ENCODE measurements at regions of chr1 and their contacts with region 1.

Region 1: GRCh38 chr1:157138220-157139051 is at the start of gene ETV3:
- DNase-seq: peak; percentile 70 to 89
- H3K4me3 ChIP-seq: peak within 1 kb of the TSS; percentile 68 to 99 (median 94)
- H3K27ac ChIP-seq: peak within 1 kb of the TSS; percentile 87
- H3K4me1 ChIP-seq: peaks cover 2 to 17% (median 7%) of the 10 kb centered on the region in 4 experiments; a peak in 4 of 7 replicates
- H3K27me3 ChIP-seq: no peaks in the 10 kb centered on the region
- CTCF ChIP-seq: no peak
- EP300 ChIP-seq: peak in 1 of 2 experiments; percentile 24; a peak in 1 of 3 replicates
- POLR2A ChIP-seq: peak in 1 of 2 experiments; percentile 71; a peak in 1 of 3 replicates
- RAD21 ChIP-seq: no peak
- total RNA-seq, gene ETV3: 23.8 and 26.6 TPM in 2 replicates

Region 2: DNA sequence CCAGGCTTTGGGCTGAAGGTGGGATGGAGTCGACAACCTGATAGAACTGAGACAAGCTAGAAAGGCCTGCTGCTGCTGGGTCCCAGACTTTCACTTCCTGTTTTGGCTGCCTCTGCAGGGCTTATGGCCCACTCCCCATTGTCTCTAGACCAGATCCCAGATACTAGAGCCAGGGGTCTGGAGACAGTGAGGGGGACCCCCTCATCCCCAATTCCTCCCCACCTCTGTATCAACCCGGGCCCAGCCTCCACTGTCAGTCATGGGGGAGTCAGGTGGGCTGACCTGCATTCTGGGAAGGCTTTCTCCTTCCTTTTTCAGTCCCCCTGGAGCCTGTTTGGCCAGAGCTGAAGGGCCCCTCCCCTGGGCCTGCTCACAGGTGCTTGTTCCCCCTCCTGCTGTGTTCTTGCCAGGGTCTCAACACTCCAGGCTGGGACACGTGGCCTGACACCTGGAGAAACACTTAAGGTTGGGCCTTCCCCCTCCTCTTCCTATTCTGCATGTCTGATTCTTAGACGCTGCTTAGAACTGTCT is 20.8 kb before region 1 on chr1:
- CTCF ChIA-PET with region 1: interaction called, 10 read pairs
- POLR2A ChIA-PET with region 1: interaction called, 21 read pairs
- DNase-seq: peak in 1 of 2 experiments; percentile 52
- H3K4me3 ChIP-seq: no peak overlapping the region
- H3K27ac ChIP-seq: no peak overlapping the region; the same call in 1 of the 2 replicates
- H3K4me1 ChIP-seq: peaks cover 18 to 42% (median 27%) of the 10 kb centered on the region in 4 experiments
- H3K27me3 ChIP-seq: peaks cover 0 to 3% (median under 1%) of the 10 kb centered on the region in 4 experiments; a peak in 4 of 7 replicates
- CTCF ChIP-seq: no peak
- EP300 ChIP-seq: no peak
- POLR2A ChIP-seq: no peak
- RAD21 ChIP-seq: no peak

Region 3: GRCh38 chr1:157124855-157125254 is 13.6 kb before region 1 on chr1:
- CTCF ChIA-PET with region 1: interaction called, 27 read pairs
- POLR2A ChIA-PET with region 1: interaction called, 28 read pairs
- DNase-seq: no peak
- H3K4me3 ChIP-seq: no peak overlapping the region
- H3K27ac ChIP-seq: no peak overlapping the region
- H3K4me1 ChIP-seq: peaks cover 0 to 6% (median 0%) of the 10 kb centered on the region in 4 experiments; a peak in 1 of 7 replicates
- H3K27me3 ChIP-seq: no peaks in the 10 kb centered on the region
- CTCF ChIP-seq: peak in 2 of 3 experiments; percentile 30 to 31; a peak in 2 of 4 replicates
- EP300 ChIP-seq: no peak
- POLR2A ChIP-seq: no peak
- RAD21 ChIP-seq: no peak; a peak in 1 of 4 replicates

Region 4: DNA sequence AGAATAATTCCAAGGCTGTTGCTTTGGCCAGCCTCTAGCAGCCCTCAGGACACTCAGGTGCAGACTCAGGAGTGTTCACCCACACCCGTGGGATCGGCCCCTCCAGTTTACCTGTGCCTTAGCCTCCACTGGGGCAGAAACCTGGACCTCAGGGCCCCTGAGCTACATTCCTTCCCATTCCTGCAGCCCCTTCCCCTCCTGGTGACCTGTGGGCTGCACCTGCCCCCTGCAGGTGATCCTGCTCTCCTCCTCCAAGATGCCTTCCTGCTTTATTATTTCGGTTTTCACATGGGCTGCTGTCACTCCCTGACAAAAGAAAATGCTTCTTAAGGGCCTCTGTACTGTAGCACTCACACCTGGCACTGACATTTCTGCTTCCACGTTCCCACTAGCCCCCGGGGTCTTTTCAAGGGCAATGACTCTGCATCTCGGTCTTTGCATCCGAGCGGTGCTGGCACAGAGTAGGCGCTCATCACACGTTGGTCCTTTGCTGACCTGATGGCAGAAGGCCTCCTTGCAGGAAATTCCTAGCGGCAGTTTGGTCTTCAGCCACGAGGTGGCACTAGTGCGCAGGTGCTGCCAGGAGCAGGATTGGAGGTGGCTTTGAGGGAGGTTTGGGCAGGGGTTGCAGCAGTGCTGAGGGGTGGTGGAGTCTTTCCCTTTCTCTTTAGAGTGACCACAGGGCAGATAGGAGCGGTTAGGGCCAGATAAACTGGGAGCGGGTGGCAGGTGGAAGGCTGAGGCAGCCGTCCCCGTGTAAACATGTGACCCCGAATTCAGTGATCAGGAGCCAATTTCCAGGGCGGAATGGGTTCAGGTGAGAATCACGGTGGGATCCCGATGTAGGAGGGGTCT is 25.1 kb after region 1 on chr1:
- CTCF ChIA-PET with region 1: interaction called, 12 read pairs
- POLR2A ChIA-PET with region 1: interaction called, 70 read pairs
- DNase-seq: peak; percentile 86 to 100
- H3K4me3 ChIP-seq: peak overlapping the region in 2 of 4 experiments; percentile 17 to 43; a peak in 2 of 8 replicates
- H3K27ac ChIP-seq: peak overlapping the region; percentile 55; the same call in 1 of the 2 replicates
- H3K4me1 ChIP-seq: peaks cover 11 to 19% (median 16%) of the 10 kb centered on the region in 4 experiments
- H3K27me3 ChIP-seq: no peaks in the 10 kb centered on the region
- CTCF ChIP-seq: peak; percentile 93 to 98 (median 95)
- EP300 ChIP-seq: no peak
- POLR2A ChIP-seq: 0 out of 3 replicates have a peak, but pooled peaks of 1 of the 2 experiments have one; percentile 14
- RAD21 ChIP-seq: peak; percentile 60 to 74

Region 5: DNA sequence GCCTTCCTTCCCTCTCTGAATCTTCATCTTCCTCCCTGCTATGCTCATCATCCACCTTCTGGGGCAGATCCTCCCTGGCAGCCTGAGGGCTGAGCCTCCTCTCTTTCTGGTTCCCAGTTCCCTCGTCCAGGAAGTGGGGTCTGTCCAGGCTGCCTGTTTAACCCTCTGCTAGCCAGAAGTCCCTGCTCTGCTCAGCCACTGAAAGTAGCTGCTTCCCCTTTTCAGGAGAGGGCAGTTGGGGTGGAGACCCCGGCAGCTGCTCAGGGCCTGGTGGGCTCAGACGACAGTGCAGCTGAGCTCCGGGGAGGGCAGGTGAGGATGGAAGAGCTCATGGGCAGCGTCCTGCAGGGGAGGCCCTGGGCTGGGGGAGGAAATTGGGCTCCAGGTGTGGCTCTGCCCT is 42.8 kb after region 1 on chr1:
- CTCF ChIA-PET with region 1: no interaction called
- POLR2A ChIA-PET with region 1: no interaction called
- DNase-seq: no peak
- H3K4me3 ChIP-seq: no peak overlapping the region
- H3K27ac ChIP-seq: no peak overlapping the region
- H3K4me1 ChIP-seq: peaks cover 0 to 3% (median 2%) of the 10 kb centered on the region in 4 experiments; a peak in 2 of 7 replicates
- H3K27me3 ChIP-seq: 0 out of 7 replicates have a peak, but pooled peaks cover 0 to 3% (median 0%) of the 10 kb centered on the region in 4 experiments
- CTCF ChIP-seq: no peak
- EP300 ChIP-seq: no peak
- POLR2A ChIP-seq: no peak
- RAD21 ChIP-seq: no peak

Measured in H1 (cell line).